MCF 10A (cell line): ENCODE measurements at regions of chr10 and their contacts with region 1.

Region 1: DNA sequence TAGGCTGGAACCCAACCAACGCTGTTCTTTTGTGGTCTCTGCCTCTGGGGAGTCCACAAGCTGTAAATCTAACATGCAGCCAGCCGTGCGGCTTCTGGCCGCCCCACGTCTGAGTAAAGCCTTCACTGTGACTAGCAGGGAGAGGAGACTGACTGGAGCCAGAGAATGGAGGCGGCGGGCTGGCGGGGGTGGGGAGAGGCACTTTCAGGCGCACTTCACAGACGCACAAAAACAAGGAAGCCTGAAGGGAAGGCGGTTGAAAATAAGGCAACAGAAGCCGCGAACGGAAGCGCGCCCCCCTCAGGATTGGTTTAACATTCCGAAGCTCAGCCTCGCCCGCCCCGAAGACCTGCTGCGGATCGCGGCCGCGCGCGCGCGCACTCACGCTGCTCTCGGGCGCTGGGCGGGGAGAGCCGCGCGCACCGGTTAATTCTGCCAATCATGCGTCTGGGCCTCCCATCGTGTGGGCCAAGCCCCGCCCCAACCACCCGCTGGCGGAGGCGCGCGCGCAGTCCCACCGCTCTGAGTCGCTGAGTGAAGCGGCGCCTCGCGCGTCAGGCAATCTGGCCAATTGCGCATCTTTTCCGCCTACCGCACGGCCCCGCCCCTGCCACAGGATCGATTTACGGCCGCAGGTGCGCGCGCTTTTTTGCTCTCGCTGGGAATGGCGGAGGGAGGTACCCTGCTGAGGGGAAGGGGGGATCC is at the start of gene SFR1:
- DNase-seq: peak; percentile 98
- H3K4me3 Mint-ChIP-seq: peak within 1 kb of the TSS; percentile 79
- H3K27ac Mint-ChIP-seq: peak within 1 kb of the TSS; percentile 99
- H3K4me1 Mint-ChIP-seq: peaks cover 45% of the 10 kb centered on the region
- H3K27me3 Mint-ChIP-seq: no peaks in the 10 kb centered on the region
- CTCF ChIP-seq: peak; percentile 52
- total RNA-seq, gene SFR1: 7.7 and 8.9 TPM in 2 replicates

Region 2: DNA sequence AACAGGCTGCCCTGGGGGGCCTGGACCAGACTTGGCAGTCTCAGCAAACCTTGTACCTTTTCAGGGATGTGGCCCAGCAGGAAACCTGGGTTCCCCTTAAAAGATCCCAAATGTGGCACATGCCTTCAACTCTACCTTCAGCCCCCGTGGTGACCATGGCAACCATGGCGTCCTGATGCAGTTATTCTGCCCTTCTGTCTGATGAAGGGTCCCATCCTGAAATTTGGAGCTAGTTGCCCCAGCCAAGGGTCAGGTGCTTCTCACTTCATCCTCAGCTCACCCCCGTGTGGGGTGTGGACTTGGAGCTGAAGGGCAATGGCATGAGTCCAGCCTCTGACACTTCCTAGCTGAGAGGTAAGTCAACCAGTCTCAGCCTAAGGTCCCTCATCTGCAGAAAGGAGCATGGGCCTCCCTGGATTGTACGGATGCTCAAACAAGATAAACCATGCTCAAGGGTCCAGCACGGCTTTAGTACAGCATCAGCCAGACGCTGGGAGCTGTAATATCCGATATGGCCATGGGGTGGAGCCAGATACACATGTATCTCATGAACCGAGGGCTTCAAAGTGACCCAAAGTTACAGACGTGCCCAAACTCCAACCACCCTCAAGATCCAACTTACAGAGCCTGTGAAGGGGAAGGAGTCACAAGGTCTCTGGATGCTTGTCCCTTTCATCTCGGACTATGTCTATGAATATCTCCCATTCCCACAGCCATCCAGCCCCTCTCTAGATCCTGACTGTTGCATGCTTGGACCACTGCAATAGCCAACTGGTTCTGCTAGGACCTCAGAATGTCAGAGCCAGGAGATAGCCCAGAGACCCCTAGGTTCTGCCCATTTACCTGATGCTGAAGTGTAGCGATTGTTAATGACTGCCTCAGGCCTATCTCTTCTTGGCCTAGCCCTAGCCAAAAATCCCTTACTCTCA is 408.8 kb before region 1 on chr10:
- CTCF ChIA-PET with region 1: interaction called, 4 read pairs
- POLR2A ChIA-PET with region 1: no interaction called
- intact Hi-C with region 1: loop called (anchors 2 kb)
- DNase-seq: peak; percentile 79
- H3K4me3 Mint-ChIP-seq: no peak overlapping the region
- H3K27ac Mint-ChIP-seq: peak overlapping the region; percentile 31
- H3K4me1 Mint-ChIP-seq: peaks cover 29% of the 10 kb centered on the region
- H3K27me3 Mint-ChIP-seq: no peaks in the 10 kb centered on the region
- CTCF ChIP-seq: peak; percentile 93

Region 3: GRCh38 chr10:103966671-103967447 is 154.8 kb before region 1 on chr10 and contains the start of gene SLK:
- CTCF ChIA-PET with region 1: interaction called, 4 read pairs
- POLR2A ChIA-PET with region 1: interaction called, 63 read pairs
- intact Hi-C with region 1: loop called (anchors 2 kb)
- DNase-seq: peak; percentile 75
- H3K4me3 Mint-ChIP-seq: peak within 1 kb of the TSS; percentile 89
- H3K27ac Mint-ChIP-seq: peak within 1 kb of the TSS; percentile 96
- H3K4me1 Mint-ChIP-seq: no peaks in the 10 kb centered on the region
- H3K27me3 Mint-ChIP-seq: no peaks in the 10 kb centered on the region
- CTCF ChIP-seq: no peak
- total RNA-seq, gene SLK: 57.3 and 71.9 TPM in 2 replicates

Region 4: DNA sequence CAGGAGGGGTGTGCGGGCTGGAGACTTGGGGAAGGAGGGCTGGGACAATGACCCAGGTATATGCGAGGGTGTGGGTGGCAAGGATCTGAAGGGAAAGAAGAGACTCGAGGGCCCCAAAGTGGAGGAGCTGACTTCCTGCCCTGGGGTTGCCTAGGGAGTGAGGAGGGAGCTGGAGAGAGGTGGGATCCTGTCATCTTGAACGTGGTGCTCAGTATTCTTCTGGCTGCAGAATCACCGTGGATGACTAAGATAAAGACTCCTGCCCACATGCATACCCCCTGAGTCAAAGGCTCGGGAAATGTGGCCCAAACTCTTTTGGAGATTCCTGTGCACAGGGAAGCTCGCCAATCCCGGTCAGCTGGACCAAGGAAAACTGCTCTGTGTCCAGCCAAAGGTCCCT is 67.2 kb before region 1 on chr10:
- CTCF ChIA-PET with region 1: interaction called, 20 read pairs
- POLR2A ChIA-PET with region 1: interaction called, 141 read pairs
- intact Hi-C with region 1: loop called (anchors 1 kb)
- DNase-seq: peak; percentile 73
- H3K4me3 Mint-ChIP-seq: no peak overlapping the region
- H3K27ac Mint-ChIP-seq: peak overlapping the region; percentile 84
- H3K4me1 Mint-ChIP-seq: peaks cover 37% of the 10 kb centered on the region
- H3K27me3 Mint-ChIP-seq: no peaks in the 10 kb centered on the region
- CTCF ChIP-seq: no peak

Region 5: GRCh38 chr10:104099274-104099673 is 22.4 kb before region 1 on chr10:
- CTCF ChIA-PET with region 1: interaction called, 6 read pairs
- POLR2A ChIA-PET with region 1: interaction called, 1,749 read pairs
- intact Hi-C with region 1: no loop called
- DNase-seq: no peak
- H3K4me3 Mint-ChIP-seq: no peak overlapping the region
- H3K27ac Mint-ChIP-seq: no peak overlapping the region
- H3K4me1 Mint-ChIP-seq: peaks cover 6% of the 10 kb centered on the region
- H3K27me3 Mint-ChIP-seq: no peaks in the 10 kb centered on the region
- CTCF ChIP-seq: no peak

Region 6: DNA sequence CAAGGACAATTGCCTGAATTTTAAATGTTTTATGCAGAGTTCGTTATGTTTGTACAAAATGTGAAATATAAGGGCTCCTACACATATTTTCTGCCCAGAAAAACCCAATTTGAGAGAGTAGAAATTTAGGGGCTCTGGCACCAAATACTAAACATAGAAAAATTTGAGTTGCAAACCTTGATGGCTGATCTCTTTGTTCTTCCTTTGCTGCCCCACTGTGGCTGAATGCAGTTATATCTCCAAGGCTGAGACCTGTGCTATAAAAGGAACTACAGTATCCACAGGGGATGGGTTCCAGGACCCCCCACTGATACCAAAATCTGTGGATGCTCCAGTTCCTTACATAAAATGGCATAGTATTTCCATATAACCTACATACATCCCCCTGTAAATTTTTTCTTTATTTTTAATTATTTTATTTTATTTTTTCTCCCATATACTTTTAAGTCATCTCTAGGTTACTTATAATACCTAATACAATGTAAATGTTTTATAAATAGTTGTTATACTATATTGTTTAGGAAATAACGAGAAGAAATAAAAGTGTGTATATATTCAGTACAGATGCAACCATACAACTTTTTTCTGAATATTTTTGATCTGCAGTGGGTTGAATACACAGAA is 88.0 kb after region 1 on chr10:
- CTCF ChIA-PET with region 1: interaction called, 5 read pairs
- POLR2A ChIA-PET with region 1: interaction called, 8 read pairs
- intact Hi-C with region 1: loop called (anchors 2 kb)
- DNase-seq: peak; percentile 62
- H3K4me3 Mint-ChIP-seq: no peak overlapping the region
- H3K27ac Mint-ChIP-seq: no peak overlapping the region
- H3K4me1 Mint-ChIP-seq: no peaks in the 10 kb centered on the region
- H3K27me3 Mint-ChIP-seq: no peaks in the 10 kb centered on the region
- CTCF ChIP-seq: peak; percentile 65